Dendritic cell treated with granulocyte-macrophage colony-stimulating factor and Interleukin-4, amounts not matched to agents 40 ng/mL and 50 ng/mL, for 4 days (primary cell): ENCODE measurements at regions of chr10 and their contacts with region 1.

Region 1: DNA sequence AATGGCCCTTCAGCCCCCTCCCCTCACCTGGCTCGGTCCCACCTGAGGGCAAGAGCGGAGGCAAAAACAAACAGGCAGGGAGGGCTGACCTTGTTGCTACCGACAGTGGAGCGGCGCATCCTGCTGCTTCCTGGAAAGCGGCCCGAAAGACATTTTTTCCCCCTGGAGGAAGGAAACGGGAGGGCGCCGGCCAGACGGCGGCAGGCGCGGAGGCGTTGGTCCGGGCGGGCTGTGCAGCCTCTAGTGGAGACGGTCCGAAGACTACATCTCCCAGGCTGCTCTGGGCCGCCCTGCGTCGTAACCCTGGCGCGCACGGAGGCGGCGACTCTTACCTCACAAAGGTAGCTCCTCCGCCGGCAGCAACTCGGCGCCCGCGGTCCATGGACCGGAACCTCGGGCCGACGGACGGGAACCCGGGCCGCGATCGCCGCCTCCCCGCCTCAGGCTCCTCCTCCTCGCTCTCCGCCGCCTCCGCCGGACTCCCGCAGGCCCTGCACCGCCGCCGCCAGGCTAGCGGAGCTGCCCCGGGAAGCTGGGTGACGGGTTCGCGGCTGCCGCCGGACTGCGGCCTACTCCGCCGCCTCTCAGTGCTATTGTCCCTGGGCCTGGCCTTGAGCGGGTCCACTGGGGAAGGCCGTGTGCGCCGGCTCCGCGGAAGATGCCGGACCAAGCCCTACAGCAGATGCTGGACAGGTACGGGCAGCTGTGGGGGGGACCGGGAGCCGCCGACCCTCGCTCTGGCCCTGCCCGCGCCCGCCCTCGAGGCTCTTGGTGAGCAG is at the starts of genes CPEB3 and MARCHF5:
- H3K4me3 Mint-ChIP-seq: peak within 1 kb of the TSS; percentile 88
- H3K27ac Mint-ChIP-seq: peak within 1 kb of the TSS; percentile 92
- H3K4me1 Mint-ChIP-seq: peaks cover 21% of the 10 kb centered on the region
- H3K27me3 Mint-ChIP-seq: no peaks in the 10 kb centered on the region

Region 2: GRCh38 chr10:92087750-92088395 is 203.2 kb before region 1 on chr10:
- intact Hi-C with region 1: loop called (anchors 1 kb)
- H3K4me3 Mint-ChIP-seq: no peak overlapping the region
- H3K27ac Mint-ChIP-seq: no peak overlapping the region
- H3K4me1 Mint-ChIP-seq: peaks cover 11% of the 10 kb centered on the region
- H3K27me3 Mint-ChIP-seq: no peaks in the 10 kb centered on the region

Region 3: GRCh38 chr10:92240289-92241157 is 50.5 kb before region 1 on chr10:
- intact Hi-C with region 1: loop called (anchors 2 kb)
- H3K4me3 Mint-ChIP-seq: peak overlapping the region; percentile 91
- H3K27ac Mint-ChIP-seq: peak overlapping the region; percentile 97
- H3K4me1 Mint-ChIP-seq: peaks cover 47% of the 10 kb centered on the region
- H3K27me3 Mint-ChIP-seq: no peaks in the 10 kb centered on the region

Region 4: DNA sequence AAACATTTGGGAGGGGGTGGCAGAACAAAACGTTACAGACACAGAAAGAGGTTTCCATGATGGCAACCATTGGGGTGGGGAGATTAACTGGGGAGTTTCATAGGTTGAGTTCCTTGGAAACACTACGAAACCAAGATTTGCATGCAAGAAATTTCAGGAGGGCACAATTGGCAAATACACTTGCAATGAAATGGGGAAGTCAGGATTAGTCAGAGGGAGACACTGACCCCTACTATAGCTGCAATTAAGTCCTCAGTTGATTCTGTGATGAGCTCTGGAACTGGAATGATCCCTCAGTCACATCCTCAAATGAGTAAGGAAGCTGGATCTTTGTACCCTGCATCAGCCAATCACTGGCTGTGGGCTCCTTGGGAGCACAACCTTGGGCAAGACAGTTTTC is 22.3 kb before region 1 on chr10:
- intact Hi-C with region 1: loop called (anchors 1 kb)
- H3K4me3 Mint-ChIP-seq: no peak overlapping the region
- H3K27ac Mint-ChIP-seq: peak overlapping the region; percentile 70
- H3K4me1 Mint-ChIP-seq: peaks cover 37% of the 10 kb centered on the region
- H3K27me3 Mint-ChIP-seq: no peaks in the 10 kb centered on the region

Region 5: DNA sequence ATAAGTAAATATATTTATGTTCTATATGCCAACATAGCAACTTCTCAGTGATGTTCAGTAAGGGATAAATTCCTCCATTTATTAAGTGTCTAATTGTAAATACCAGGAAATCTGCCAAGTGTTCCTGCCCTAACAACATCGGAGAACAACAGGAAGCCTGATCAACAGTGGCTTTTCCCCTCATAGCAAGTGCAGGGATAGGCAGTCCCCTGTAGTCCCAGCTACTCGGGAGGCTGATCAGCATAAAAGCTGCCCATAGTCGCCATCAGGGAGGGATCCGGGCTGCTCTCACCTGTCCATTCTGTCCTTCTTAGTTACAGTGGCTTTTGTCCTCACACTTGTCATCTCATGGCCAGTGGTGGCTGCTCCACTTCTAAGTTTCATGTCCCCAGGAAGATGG is 141.6 kb after region 1 on chr10:
- intact Hi-C with region 1: loop called (anchors 10 kb)
- H3K4me3 Mint-ChIP-seq: no peak overlapping the region
- H3K27ac Mint-ChIP-seq: no peak overlapping the region
- H3K4me1 Mint-ChIP-seq: peaks cover 19% of the 10 kb centered on the region
- H3K27me3 Mint-ChIP-seq: peaks cover 2% of the 10 kb centered on the region